ENCODE measurements at regions of chr6 and their contacts with region 1.

Region 1: DNA sequence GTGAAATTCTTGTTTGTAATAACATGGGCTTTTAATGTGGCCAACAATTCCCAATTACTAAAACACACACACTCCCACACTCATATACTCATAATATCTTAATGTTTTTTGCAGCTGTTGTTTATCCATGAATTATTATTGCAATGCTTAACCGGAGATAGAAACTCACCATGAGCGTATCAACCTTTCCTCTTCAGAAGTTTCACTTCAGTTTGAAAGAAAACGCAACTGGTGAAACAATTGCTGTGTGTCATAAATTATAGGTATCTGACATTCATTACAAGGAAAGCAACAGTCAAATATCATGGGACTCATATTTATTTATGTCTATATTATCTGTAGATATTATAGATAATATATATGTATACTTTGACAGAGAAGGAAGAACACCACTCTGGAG is 104.1 kb downstream of the HDGFL1 start:
- DNase-seq: no peak
- ATAC-seq: peak in 1 of 4 donors; percentile 48
- H3K4me3 ChIP-seq: no peak overlapping the region
- H3K27ac ChIP-seq: no peak overlapping the region
- H3K4me1 ChIP-seq: peaks cover 0 to 42% (median 25%) of the 10 kb centered on the region in 12 donors
- H3K27me3 ChIP-seq: no peaks in the 10 kb centered on the region
- CTCF ChIP-seq: no peak
- POLR2A ChIP-seq: no peak

Region 2: GRCh38 chr6:22613695-22614094 is 59.8 kb before region 1 on chr6:
- intact Hi-C with region 1: loop called in 1 of 10 experiments (anchors 5 kb)
- DNase-seq: peak in 1 of 5 donors; percentile 20
- ATAC-seq: peak in 3 of 4 donors; percentile 55 to 88 (median 75)
- H3K4me3 ChIP-seq: no peak overlapping the region
- H3K27ac ChIP-seq: peak overlapping the region in 10 of 12 donors; percentile 12 to 80 (median 48)
- H3K4me1 ChIP-seq: peaks cover 0 to 30% (median 19%) of the 10 kb centered on the region in 12 donors
- H3K27me3 ChIP-seq: no peaks in the 10 kb centered on the region
- CTCF ChIP-seq: no peak
- POLR2A ChIP-seq: no peak

Region 3: GRCh38 chr6:22880686-22881433 is 207.4 kb after region 1 on chr6:
- intact Hi-C with region 1: no loop called
- DNase-seq: no peak
- ATAC-seq: peak; percentile 55 to 78 (median 72)
- H3K4me3 ChIP-seq: no peak overlapping the region
- H3K27ac ChIP-seq: peak overlapping the region in 8 of 12 donors; percentile 19 to 72 (median 62)
- H3K4me1 ChIP-seq: peaks cover 0 to 47% (median 17%) of the 10 kb centered on the region in 12 donors
- H3K27me3 ChIP-seq: no peaks in the 10 kb centered on the region
- CTCF ChIP-seq: no peak
- POLR2A ChIP-seq: no peak

Region 4: GRCh38 chr6:22892452-22892851 is 219.0 kb after region 1 on chr6:
- intact Hi-C with region 1: no loop called
- DNase-seq: no peak
- ATAC-seq: peak; percentile 32 to 85 (median 74)
- H3K4me3 ChIP-seq: no peak overlapping the region
- H3K27ac ChIP-seq: peak overlapping the region in 10 of 12 donors; percentile 29 to 78 (median 50)
- H3K4me1 ChIP-seq: peaks cover 0 to 22% (median 3%) of the 10 kb centered on the region in 12 donors
- H3K27me3 ChIP-seq: no peaks in the 10 kb centered on the region
- CTCF ChIP-seq: no peak
- POLR2A ChIP-seq: no peak